GM13976 (cell line): ENCODE measurements at regions of chr11 and their contacts with region 1.

Region 1: GRCh38 chr11:554824-555472 is 5.6 kb downstream of the LMNTD2 start:
- DNase-seq: peak; percentile 92
- CTCF ChIP-seq: peak; percentile 89

Region 2: GRCh38 chr11:727859-728748 is 173.2 kb after region 1 on chr11:
- in situ Hi-C with region 1: loop called (anchors 10 kb)
- DNase-seq: peak; percentile 95
- CTCF ChIP-seq: peak; percentile 98